Calu3 (cell line): ENCODE measurements at regions of chr3 and their contacts with region 1.

Region 1: DNA sequence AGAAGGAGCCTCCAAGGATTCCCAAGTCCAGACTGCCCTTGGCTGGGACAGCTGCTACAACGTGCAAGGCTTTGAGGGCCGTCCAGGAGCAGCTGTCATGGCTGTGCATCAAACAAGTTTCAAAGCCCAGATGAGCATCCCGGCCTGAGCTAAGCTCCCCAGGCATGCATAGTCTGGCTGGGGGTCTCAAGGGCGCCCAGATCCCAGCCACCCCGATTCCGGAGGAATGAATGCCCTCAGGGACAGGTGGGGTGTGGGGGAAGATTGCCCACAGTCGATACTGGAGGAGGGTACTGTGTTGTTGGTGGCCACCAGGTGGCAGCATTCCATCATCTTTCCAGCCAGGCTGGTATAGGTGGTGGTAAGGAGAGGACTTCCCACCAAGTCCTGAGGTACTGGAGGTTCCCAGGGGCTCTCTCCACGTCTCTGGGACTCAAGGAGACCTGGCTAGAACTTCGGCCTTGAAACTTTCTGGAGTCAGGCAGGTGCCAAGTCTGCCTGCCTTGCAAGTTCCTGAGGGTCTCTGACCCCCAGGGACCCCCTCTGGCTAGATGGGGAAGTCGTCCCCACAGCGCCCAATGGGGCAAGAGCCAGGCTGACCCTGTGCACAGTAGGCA is 32.8 kb downstream of the RBM5 start:
- DNase-seq: peak; percentile 84
- H3K4me3 Mint-ChIP-seq: no peak overlapping the region
- H3K27ac Mint-ChIP-seq: no peak overlapping the region
- H3K4me1 Mint-ChIP-seq: peaks cover 8% of the 10 kb centered on the region
- H3K27me3 Mint-ChIP-seq: no peaks in the 10 kb centered on the region
- CTCF ChIP-seq: peak; percentile 59

Region 2: DNA sequence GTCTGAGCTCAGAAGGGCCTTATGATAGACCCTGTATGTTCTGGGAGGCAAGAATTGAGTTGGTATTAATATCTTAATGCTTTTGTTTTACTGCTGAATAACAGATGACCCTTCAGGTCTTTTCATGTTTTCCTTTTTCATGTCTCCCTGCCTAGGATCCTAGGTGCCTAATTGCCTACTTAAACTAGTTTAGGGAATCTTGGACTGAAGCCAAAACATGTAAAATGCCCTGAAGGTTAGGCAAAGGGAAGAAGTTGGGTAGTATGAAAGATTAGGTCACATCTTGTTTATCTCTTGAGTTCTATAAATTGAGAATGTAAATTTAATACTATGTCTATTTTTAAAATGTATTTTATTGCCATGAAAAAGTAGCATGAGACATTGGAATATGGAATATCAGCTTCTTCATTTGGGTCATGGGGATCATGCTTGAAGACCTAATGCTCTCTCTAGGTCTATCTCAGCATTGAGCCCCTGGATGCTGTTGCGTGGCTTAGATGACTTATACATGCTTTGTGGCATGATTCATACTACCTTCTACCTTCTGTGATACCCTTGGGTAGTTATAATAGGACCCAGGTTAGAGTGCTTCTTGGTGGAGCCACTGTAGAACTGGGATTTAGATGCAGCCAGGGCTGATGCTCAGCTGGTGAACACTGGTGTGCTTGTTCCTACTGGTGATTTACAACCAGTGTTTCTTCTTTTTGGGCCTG is 155.1 kb before region 1 on chr3:
- CTCF ChIA-PET with region 1: no interaction called
- intact Hi-C with region 1: no loop called
- DNase-seq: no peak
- H3K4me3 Mint-ChIP-seq: no peak overlapping the region
- H3K27ac Mint-ChIP-seq: no peak overlapping the region
- H3K4me1 Mint-ChIP-seq: no peaks in the 10 kb centered on the region
- H3K27me3 Mint-ChIP-seq: no peaks in the 10 kb centered on the region
- CTCF ChIP-seq: no peak

Region 3: GRCh38 chr3:50192689-50193141 is 71.2 kb after region 1 on chr3:
- CTCF ChIA-PET with region 1: interaction called, 5 read pairs
- intact Hi-C with region 1: loop called (anchors 1 kb)
- DNase-seq: peak; percentile 84
- H3K4me3 Mint-ChIP-seq: no peak overlapping the region
- H3K27ac Mint-ChIP-seq: no peak overlapping the region
- H3K4me1 Mint-ChIP-seq: no peaks in the 10 kb centered on the region
- H3K27me3 Mint-ChIP-seq: peaks cover 15% of the 10 kb centered on the region
- CTCF ChIP-seq: peak; percentile 92

Region 4: GRCh38 chr3:50227390-50228183 is 106.1 kb after region 1 on chr3:
- CTCF ChIA-PET with region 1: interaction called, 3 read pairs
- intact Hi-C with region 1: loop called (anchors 2 kb)
- DNase-seq: peak; percentile 97
- H3K4me3 Mint-ChIP-seq: peak overlapping the region; percentile 75
- H3K27ac Mint-ChIP-seq: peak overlapping the region; percentile 60
- H3K4me1 Mint-ChIP-seq: peaks cover 27% of the 10 kb centered on the region
- H3K27me3 Mint-ChIP-seq: peaks cover 26% of the 10 kb centered on the region
- CTCF ChIP-seq: peak; percentile 73